ENCODE measurements at regions of chr14 and their contacts with region 1.

Region 1: GRCh38 chr14:69129264-69129880 is 23.5 kb downstream of the DCAF5 start:
- DNase-seq: peak; percentile 43 to 76
- ATAC-seq: peak; percentile 75 to 87 (median 82)
- H3K4me3 ChIP-seq: no peak overlapping the region
- H3K27ac ChIP-seq: peak overlapping the region in 5 of 10 donors; percentile 4 to 39 (median 29)
- H3K4me1 ChIP-seq: peaks cover 15 to 81% (median 69%) of the 10 kb centered on the region in 9 donors
- H3K27me3 ChIP-seq: no peaks in the 10 kb centered on the region
- CTCF ChIP-seq: peak; percentile 85 to 97 (median 94)

Region 2: GRCh38 chr14:67502881-67503699 is 1626.3 kb before region 1 on chr14:
- intact Hi-C with region 1: loop called in 1 of 10 experiments (anchors 5 kb)
- DNase-seq: no peak
- ATAC-seq: no peak
- H3K4me3 ChIP-seq: no peak overlapping the region
- H3K27ac ChIP-seq: no peak overlapping the region
- H3K4me1 ChIP-seq: no peaks in the 10 kb centered on the region
- H3K27me3 ChIP-seq: peaks cover 0 to 3% (median 0%) of the 10 kb centered on the region in 7 donors
- CTCF ChIP-seq: no peak

Region 3: GRCh38 chr14:68987653-68988036 is 141.7 kb before region 1 on chr14:
- intact Hi-C with region 1: no loop called
- DNase-seq: no peak
- ATAC-seq: no peak
- H3K4me3 ChIP-seq: no peak overlapping the region
- H3K27ac ChIP-seq: no peak overlapping the region
- H3K4me1 ChIP-seq: peaks cover 0 to 4% (median 0%) of the 10 kb centered on the region in 9 donors
- H3K27me3 ChIP-seq: no peaks in the 10 kb centered on the region
- CTCF ChIP-seq: no peak

Region 4: GRCh38 chr14:69068744-69069421 is 60.5 kb before region 1 on chr14:
- intact Hi-C with region 1: no loop called
- DNase-seq: no peak
- ATAC-seq: peak in 3 of 8 donors; percentile 17 to 41 (median 26)
- H3K4me3 ChIP-seq: no peak overlapping the region
- H3K27ac ChIP-seq: peak overlapping the region in 2 of 10 donors; percentile 1 to 6
- H3K4me1 ChIP-seq: peaks cover 0 to 15% (median 0%) of the 10 kb centered on the region in 9 donors
- H3K27me3 ChIP-seq: no peaks in the 10 kb centered on the region
- CTCF ChIP-seq: no peak

Region 5: GRCh38 chr14:69088586-69088985 is 40.8 kb before region 1 on chr14:
- intact Hi-C with region 1: no loop called
- DNase-seq: no peak
- ATAC-seq: peak in 1 of 8 donors; percentile 12
- H3K4me3 ChIP-seq: no peak overlapping the region
- H3K27ac ChIP-seq: peak overlapping the region in 1 of 10 donors; percentile 5
- H3K4me1 ChIP-seq: peaks cover 0 to 16% (median 11%) of the 10 kb centered on the region in 9 donors
- H3K27me3 ChIP-seq: no peaks in the 10 kb centered on the region
- CTCF ChIP-seq: no peak

Region 6: DNA sequence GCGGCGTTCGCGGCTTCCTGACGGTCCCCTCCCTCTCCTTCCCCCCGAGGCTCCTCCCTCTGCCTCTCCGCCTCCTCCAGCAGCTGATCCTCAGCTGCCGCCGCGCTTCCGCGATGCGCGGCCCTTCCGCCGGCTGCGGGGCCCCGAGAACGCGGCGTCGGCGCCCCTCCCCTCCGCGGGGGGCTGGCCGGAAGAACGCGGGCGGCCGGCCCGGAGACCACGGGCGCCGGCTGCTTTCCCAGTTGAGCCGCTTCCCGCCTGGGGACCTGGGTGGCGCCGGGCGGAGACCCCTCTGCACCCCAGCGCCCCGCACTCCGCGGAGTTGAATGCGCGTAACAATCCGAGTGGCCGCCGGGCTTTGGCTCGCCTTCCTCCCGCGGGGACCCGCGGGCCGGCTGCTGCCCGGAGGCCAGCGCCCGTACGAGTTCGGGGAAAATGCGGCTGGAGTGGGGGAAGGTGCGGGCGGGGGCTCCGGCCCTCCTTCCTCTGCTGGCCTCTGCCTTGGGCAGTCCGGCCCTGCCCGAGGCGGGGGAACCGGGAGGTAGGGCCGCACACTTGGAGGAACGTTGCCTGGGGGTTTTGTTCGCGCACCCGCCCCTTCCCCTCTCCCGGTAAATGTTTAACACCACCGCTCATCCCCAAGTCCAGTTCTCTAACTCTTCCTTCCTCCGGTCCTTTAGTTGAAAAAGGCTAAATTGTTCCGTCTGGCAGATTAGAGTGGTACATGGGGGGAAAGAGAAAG is 23.9 kb after region 1 on chr14:
- intact Hi-C with region 1: loop called in 1 of 10 experiments (anchors 2 kb)
- DNase-seq: peak; percentile 93 to 94
- ATAC-seq: peak; percentile 92 to 95 (median 93)
- H3K4me3 ChIP-seq: peak overlapping the region; percentile 79 to 98 (median 90)
- H3K27ac ChIP-seq: peak overlapping the region; percentile 76 to 98 (median 94)
- H3K4me1 ChIP-seq: peaks cover 3 to 44% (median 33%) of the 10 kb centered on the region in 9 donors
- H3K27me3 ChIP-seq: no peaks in the 10 kb centered on the region
- CTCF ChIP-seq: peak in 1 of 9 donors; percentile 3

Region 7: DNA sequence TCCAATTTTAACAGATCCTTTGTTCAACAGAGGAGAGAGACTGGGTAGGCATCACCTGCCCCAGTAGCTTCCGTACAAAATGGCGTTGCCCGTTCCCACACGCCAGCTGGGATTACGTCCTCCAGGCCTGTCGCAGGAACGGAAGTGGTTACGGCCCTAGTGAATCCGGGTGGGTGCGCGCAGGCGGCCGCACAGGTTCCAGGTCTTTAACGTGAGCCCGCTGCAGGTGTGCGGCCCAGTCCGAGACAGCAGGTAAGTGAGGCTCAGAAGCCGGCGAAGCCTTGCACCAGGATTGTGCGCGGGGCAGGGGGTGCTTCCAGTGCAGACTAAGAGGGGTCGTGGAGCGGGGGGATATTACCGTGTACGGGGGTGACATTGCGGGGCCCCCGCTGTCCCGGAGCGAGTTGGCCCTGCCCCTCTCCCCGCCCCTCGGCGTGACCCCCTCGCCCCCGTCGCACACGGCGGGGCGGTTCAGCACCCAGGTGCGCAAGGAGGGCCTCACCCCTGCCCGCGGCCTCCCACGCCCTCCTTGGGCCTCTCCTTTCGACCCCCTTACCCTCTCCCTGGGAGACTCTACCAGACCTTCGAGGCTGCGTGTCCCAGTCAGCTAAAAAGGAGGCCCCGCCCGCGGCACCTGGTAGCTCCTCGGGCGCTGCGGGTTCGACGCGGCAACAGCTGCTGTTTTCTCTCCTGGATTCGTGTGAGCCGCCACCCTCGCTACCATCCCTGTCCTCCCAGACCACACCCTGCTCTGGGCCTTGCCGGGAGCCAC is 62.2 kb after region 1 on chr14 and contains the start of gene EXD2:
- intact Hi-C with region 1: loop called in 1 of 10 experiments (anchors 5 kb)
- DNase-seq: peak; percentile 84 to 87
- ATAC-seq: peak; percentile 98 to 99 (median 99)
- H3K4me3 ChIP-seq: peak within 1 kb of the TSS; percentile 78 to 99 (median 96)
- H3K27ac ChIP-seq: peak within 1 kb of the TSS; percentile 13 to 87 (median 82)
- H3K4me1 ChIP-seq: peaks cover 0 to 11% (median 9%) of the 10 kb centered on the region in 9 donors
- H3K27me3 ChIP-seq: no peaks in the 10 kb centered on the region
- CTCF ChIP-seq: no peak
- total RNA-seq, gene EXD2: 13.9 to 22.4 (median 16.3) TPM

Region 8: DNA sequence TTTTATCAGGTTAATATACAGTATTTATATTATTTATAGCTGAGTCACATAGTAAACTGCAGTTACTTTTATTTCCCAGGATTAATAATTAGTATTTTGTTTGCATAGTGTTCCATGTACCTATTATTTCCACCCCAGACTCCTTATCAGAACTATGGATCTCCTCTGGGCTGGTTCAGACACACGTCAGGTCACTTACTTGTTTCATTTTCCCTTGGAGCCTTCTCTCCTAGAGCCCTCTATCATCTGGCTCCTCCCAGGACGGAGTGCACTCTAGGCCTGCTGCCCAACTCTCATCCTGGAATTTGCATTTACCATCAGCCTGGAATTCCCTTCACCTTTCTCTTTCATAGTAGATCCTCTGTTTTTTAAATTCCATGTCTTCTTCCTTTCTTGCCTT is 102.1 kb after region 1 on chr14:
- intact Hi-C with region 1: loop called in 1 of 10 experiments (anchors 10 kb)
- DNase-seq: no peak
- ATAC-seq: peak in 6 of 8 donors; percentile 58 to 83 (median 74)
- H3K4me3 ChIP-seq: no peak overlapping the region
- H3K27ac ChIP-seq: peak overlapping the region in 1 of 10 donors; percentile 42
- H3K4me1 ChIP-seq: peaks cover 0 to 26% (median 10%) of the 10 kb centered on the region in 9 donors
- H3K27me3 ChIP-seq: no peaks in the 10 kb centered on the region
- CTCF ChIP-seq: no peak

Region 9: GRCh38 chr14:69460093-69460701 is 330.8 kb after region 1 on chr14:
- intact Hi-C with region 1: loop called in 6 of 10 experiments (anchors 5 to 10 kb)
- DNase-seq: peak in 1 of 2 donors; percentile 72
- ATAC-seq: peak; percentile 73 to 92 (median 85)
- H3K4me3 ChIP-seq: no peak overlapping the region
- H3K27ac ChIP-seq: no peak overlapping the region
- H3K4me1 ChIP-seq: peaks cover 0 to 8% (median 0%) of the 10 kb centered on the region in 9 donors
- H3K27me3 ChIP-seq: no peaks in the 10 kb centered on the region
- CTCF ChIP-seq: peak in 8 of 9 donors; percentile 63 to 83 (median 79)

Measured in heart right ventricle (tissue), 16 donors.